ENCODE measurements at regions of chr15 and their contacts with region 1.

Region 1: DNA sequence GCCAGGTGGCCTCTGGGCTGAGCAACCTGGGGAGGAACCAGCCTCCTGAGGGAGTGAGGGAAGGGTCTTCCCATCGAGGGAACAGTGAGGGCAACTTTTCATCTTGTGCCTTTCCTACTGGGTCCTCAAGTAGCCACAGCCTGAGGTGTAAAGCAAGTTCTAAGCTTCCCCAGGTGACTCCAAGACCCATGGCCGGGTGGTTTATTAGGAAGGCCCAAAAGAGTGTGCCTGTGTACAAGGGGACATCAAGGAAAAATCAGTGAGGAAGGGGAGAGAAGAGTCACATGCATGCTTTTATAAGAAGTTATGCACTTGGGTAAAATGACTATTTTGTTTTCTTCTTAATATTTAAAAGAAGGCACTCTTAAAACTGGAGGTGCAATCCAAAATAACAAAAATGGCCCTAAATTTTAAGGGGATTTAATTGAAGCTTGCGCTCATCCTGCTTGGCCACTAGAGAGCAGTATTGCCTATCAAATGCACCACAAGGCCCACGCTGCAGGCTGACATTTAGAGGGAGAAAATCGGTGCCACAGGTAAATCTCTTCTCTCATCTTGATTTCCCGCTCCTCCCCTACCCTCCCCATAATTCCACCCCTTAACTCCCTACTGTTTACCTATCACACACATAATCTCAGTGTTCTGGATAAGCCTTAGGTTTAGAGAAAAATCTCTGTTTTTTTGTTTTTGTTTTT is 6.7 kb downstream of the NANOGP8 start:
- DNase-seq: peak; percentile 42
- ATAC-seq: peak; percentile 90
- H3K4me3 Mint-ChIP-seq: no peak overlapping the region
- H3K27ac Mint-ChIP-seq: peak overlapping the region; percentile 56
- H3K4me1 Mint-ChIP-seq: peaks cover 15% of the 10 kb centered on the region
- H3K27me3 Mint-ChIP-seq: peaks cover 4% of the 10 kb centered on the region; the same call in 1 of the 2 replicates
- CTCF ChIP-seq: peak; percentile 80

Region 2: GRCh38 chr15:34783991-34784390 is 294.4 kb before region 1 on chr15:
- CTCF ChIA-PET with region 1: no interaction called
- POLR2A ChIA-PET with region 1: no interaction called
- DNase-seq: no peak
- ATAC-seq: no peak
- H3K4me3 Mint-ChIP-seq: no peak overlapping the region
- H3K27ac Mint-ChIP-seq: no peak overlapping the region
- H3K4me1 Mint-ChIP-seq: no peaks in the 10 kb centered on the region
- H3K27me3 Mint-ChIP-seq: no peaks in the 10 kb centered on the region; the same call in 1 of the 2 replicates
- CTCF ChIP-seq: no peak

Region 3: GRCh38 chr15:35437157-35437556 is 358.8 kb after region 1 on chr15:
- CTCF ChIA-PET with region 1: interaction called, 16 read pairs
- POLR2A ChIA-PET with region 1: no interaction called
- DNase-seq: no peak
- ATAC-seq: peak; percentile 77
- H3K4me3 Mint-ChIP-seq: no peak overlapping the region
- H3K27ac Mint-ChIP-seq: peak overlapping the region; percentile 66; the same call in 1 of the 2 replicates
- H3K4me1 Mint-ChIP-seq: peaks cover 32% of the 10 kb centered on the region
- H3K27me3 Mint-ChIP-seq: no peaks in the 10 kb centered on the region
- CTCF ChIP-seq: no peak

Measured in WTC11 (cell line).